ENCODE measurements at regions of chr10 and their contacts with region 1.

Region 1: DNA sequence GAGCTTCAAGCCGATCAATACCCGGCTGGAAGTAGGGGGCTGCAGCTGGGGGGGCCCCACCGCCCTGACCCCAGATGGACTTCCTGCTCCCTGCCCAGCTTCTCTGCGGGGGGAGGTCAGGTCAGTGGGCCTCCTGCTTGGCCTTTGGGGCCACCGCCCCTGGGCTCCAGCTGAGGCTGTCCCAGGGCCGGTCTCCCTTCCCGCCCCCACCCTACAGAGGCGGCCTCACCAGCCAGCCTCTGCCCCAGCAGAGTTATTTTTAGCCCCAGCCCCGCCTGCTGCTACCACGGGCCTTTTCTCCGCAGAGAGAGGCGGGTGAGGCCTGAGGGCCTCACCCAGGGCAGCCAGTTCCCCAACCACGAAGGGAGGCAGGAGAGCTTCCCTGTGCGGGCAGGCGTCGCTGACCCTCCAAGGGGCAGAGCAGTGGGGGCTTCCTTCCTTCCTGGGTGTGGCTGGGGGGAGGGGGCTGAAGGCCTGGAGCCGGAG is 24.4 kb downstream of the PWWP2B start:
- DNase-seq: no peak
- ATAC-seq: peak; percentile 75
- H3K4me3 ChIP-seq: no peak overlapping the region
- H3K4me3 Mint-ChIP-seq: peak overlapping the region in 7 of 10 donors; percentile 2 to 63 (median 51)
- H3K27ac ChIP-seq: peak overlapping the region; percentile 50
- H3K27ac Mint-ChIP-seq: peak overlapping the region in 6 of 9 donors; percentile 34 to 93 (median 78)
- H3K4me1 ChIP-seq: peaks cover 0 to 33% of the 10 kb centered on the region in 2 donors
- H3K4me1 Mint-ChIP-seq: peaks cover 5 to 39% (median 28%) of the 10 kb centered on the region in 7 donors
- H3K27me3 ChIP-seq: no peaks in the 10 kb centered on the region
- H3K27me3 Mint-ChIP-seq: peaks cover 0 to 1% (median 0%) of the 10 kb centered on the region in 5 donors

Region 2: GRCh38 chr10:132396495-132397035 is 24.9 kb before region 1 on chr10:
- CTCF ChIA-PET with region 1: interaction called, 3 read pairs
- POLR2A ChIA-PET with region 1: interaction called, 3 read pairs
- intact Hi-C with region 1: loop called in 1 of 2 experiments (anchors 2 kb)
- DNase-seq: peak; percentile 61 to 78 (median 74)
- ATAC-seq: peak; percentile 78
- H3K4me3 ChIP-seq: no peak overlapping the region
- H3K4me3 Mint-ChIP-seq: peak overlapping the region in 1 of 10 donors; percentile 94
- H3K27ac ChIP-seq: peak overlapping the region; percentile 77
- H3K27ac Mint-ChIP-seq: no peak overlapping the region
- H3K4me1 ChIP-seq: peaks cover 9 to 10% of the 10 kb centered on the region in 2 donors
- H3K4me1 Mint-ChIP-seq: peaks cover 0 to 42% (median 25%) of the 10 kb centered on the region in 7 donors
- H3K27me3 ChIP-seq: no peaks in the 10 kb centered on the region
- H3K27me3 Mint-ChIP-seq: peaks cover 0 to 6% (median 0%) of the 10 kb centered on the region in 5 donors

Region 3: DNA sequence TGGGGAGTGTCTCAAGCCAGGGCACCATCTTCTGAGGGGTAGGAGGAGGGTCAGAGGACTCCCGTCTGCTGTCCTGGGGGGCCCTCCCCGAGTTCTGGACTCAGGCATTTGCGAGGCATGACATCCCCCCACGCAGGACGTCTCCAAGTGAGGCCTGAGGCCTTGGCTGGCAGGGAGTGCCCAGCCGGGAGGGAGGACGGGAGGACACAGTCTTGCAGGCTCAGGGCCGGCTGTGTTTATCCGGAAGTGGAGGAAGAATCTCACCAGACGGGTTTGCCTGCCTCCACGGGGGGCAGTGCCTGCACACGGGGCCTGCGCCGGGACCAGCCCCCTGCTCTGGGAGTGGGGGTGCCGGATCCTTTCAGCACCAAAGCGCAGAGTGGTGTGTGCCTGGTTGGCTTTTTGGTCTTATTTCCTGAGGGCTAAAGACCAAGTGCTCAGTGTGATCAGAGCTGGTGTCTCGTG is 13.6 kb before region 1 on chr10:
- CTCF ChIA-PET with region 1: no interaction called
- POLR2A ChIA-PET with region 1: interaction called, 3 read pairs
- intact Hi-C with region 1: loop called in 1 of 2 experiments (anchors 2 kb)
- DNase-seq: no peak
- ATAC-seq: peak; percentile 53
- H3K4me3 ChIP-seq: no peak overlapping the region
- H3K4me3 Mint-ChIP-seq: peak overlapping the region in 9 of 10 donors; percentile 23 to 72 (median 58)
- H3K27ac ChIP-seq: no peak overlapping the region
- H3K27ac Mint-ChIP-seq: peak overlapping the region in 7 of 9 donors; percentile 31 to 84 (median 62)
- H3K4me1 ChIP-seq: peaks cover 0 to 15% of the 10 kb centered on the region in 2 donors
- H3K4me1 Mint-ChIP-seq: peaks cover 3 to 37% (median 20%) of the 10 kb centered on the region in 7 donors
- H3K27me3 ChIP-seq: no peaks in the 10 kb centered on the region
- H3K27me3 Mint-ChIP-seq: no peaks in the 10 kb centered on the region